ENCODE measurements at regions of chr15 and their contacts with region 1.

Region 1: DNA sequence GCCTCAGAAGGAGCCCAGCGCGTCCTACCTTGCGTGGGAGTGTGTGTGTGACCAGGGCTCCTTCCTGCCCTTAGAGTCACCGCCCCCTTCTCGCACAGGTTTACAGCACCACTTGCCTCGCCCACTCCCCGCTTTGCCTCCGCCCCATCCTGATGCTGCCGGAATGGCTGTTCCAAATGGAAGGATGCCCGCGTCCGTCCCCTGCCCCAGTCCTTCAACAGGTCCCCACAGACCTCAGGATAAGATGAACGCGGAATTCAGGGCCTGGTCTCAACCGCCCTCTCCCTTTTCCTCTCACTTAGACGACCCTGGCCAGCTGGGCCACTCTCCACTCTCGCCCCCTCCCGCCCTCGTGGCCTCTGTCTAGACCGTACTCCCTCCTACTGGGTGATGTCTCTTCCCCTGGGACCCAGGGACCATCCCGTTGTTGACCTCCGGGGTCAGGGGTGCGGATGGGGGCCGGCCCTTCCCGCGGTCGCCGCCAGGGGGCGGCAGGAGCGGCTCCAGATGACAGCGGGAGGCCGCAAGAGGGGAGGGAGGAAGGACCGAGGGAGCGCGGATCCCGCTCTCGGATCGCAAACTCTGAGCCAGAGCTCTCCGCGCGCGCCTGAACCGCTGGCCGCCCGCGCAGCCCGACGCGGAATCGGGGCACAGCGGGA is at the start of gene THSD4:
- DNase-seq: peak; percentile 76 to 84 (median 80)
- H3K4me3 ChIP-seq: peak within 1 kb of the TSS in 2 of 4 donors; percentile 54 to 80
- H3K27ac ChIP-seq: peak within 1 kb of the TSS in 4 of 5 donors; percentile 49 to 85 (median 64)
- H3K4me1 ChIP-seq: peaks cover 0 to 5% of the 10 kb centered on the region in 2 donors
- H3K27me3 ChIP-seq: no peaks in the 10 kb centered on the region
- CTCF ChIP-seq: peak; percentile 89 to 98 (median 96)
- POLR2A ChIP-seq: peak in 1 of 2 donors; percentile 21
- total RNA-seq, gene THSD4: 11.8 to 53.2 (median 23.9) TPM

Region 2: GRCh38 chr15:70478251-70478990 is 636.6 kb before region 1 on chr15:
- intact Hi-C with region 1: no loop called
- DNase-seq: peak in 4 of 7 donors; percentile 33 to 61 (median 43)
- H3K4me3 ChIP-seq: no peak overlapping the region
- H3K27ac ChIP-seq: no peak overlapping the region
- H3K4me1 ChIP-seq: no peaks in the 10 kb centered on the region
- H3K27me3 ChIP-seq: no peaks in the 10 kb centered on the region
- CTCF ChIP-seq: no peak
- POLR2A ChIP-seq: no peak

Region 3: DNA sequence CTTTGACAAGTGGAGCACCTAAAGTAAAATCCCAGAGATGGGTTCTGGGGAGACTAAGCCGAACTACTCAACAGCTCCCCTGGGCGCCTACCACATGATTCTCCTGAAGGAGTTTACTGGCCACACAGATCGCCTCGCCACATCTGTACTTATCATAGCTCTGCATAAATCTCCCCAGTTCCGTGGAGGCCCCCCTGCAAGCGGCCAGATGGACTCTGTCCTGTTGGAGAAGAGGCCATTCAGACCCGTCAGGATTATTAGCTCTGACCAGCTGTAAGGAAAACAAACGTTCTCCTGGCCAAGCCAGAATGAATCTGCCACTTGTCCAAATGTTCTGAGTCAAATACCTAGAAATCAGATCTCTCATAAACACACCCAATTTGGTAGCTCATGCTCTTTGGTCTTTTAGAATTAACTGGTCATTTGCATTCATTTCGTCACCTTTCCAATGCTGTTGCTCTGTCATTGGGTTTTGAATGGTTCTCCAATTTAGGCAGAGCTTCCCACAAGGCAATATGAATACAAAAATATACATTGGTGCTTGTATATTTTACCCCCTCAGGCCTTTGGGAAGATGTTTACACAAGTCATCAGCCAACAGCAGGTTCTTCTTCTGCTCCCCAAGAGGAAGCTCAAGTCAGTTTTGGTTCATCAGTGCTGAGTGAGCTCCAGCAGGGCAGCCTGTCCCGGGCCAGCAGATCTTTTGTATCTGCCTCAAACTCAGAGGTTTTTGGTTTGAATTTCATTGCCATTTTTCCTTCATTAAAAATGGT is 124.8 kb after region 1 on chr15:
- intact Hi-C with region 1: loop called in 1 of 2 experiments (anchors 10 kb)
- DNase-seq: no peak
- H3K4me3 ChIP-seq: no peak overlapping the region
- H3K27ac ChIP-seq: no peak overlapping the region
- H3K4me1 ChIP-seq: no peaks in the 10 kb centered on the region
- H3K27me3 ChIP-seq: no peaks in the 10 kb centered on the region
- CTCF ChIP-seq: no peak
- POLR2A ChIP-seq: no peak

Region 4: GRCh38 chr15:71329041-71329440 is 214.0 kb after region 1 on chr15:
- intact Hi-C with region 1: no loop called
- DNase-seq: peak; percentile 16 to 72 (median 45)
- H3K4me3 ChIP-seq: no peak overlapping the region
- H3K27ac ChIP-seq: peak overlapping the region; percentile 16 to 88 (median 65)
- H3K4me1 ChIP-seq: peaks cover 14 to 15% of the 10 kb centered on the region in 2 donors
- H3K27me3 ChIP-seq: no peaks in the 10 kb centered on the region
- CTCF ChIP-seq: no peak
- POLR2A ChIP-seq: no peak

Region 5: DNA sequence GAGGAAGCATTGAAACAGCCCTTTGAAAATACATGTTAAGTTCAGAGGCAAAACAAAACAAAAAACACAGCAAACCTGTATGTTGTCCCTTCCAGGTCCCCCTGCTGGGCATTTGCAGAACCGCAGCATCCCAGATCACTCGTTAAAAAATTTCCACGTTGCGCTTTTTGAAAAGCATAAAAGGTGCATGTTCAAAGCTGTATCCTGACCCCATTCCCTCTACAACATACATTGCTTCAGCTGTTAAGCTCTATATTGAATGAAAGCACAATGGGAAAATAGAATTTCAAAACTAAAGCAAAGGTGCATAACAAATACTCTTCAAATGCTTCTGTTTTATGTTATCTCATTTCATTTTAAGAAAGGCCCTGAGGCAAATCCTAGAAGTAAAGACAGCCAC is 328.5 kb after region 1 on chr15:
- intact Hi-C with region 1: loop called in 1 of 2 experiments (anchors 5 kb)
- DNase-seq: peak; percentile 51 to 84 (median 71)
- H3K4me3 ChIP-seq: no peak overlapping the region
- H3K27ac ChIP-seq: no peak overlapping the region
- H3K4me1 ChIP-seq: peaks cover 3 to 12% of the 10 kb centered on the region in 2 donors
- H3K27me3 ChIP-seq: no peaks in the 10 kb centered on the region
- CTCF ChIP-seq: peak; percentile 79 to 91 (median 82)
- POLR2A ChIP-seq: no peak

Region 6: GRCh38 chr15:71891026-71891425 is 776.0 kb after region 1 on chr15:
- intact Hi-C with region 1: no loop called
- DNase-seq: no peak
- H3K4me3 ChIP-seq: no peak overlapping the region
- H3K27ac ChIP-seq: no peak overlapping the region
- H3K4me1 ChIP-seq: no peaks in the 10 kb centered on the region
- H3K27me3 ChIP-seq: no peaks in the 10 kb centered on the region
- CTCF ChIP-seq: no peak
- POLR2A ChIP-seq: no peak